Activated naive CD4-positive, alpha-beta T cell treated with anti-CD3 and anti-CD28 coated beads for 36 hours (primary cell): ENCODE measurements at regions of chr20 and their contacts with region 1.

Region 1: DNA sequence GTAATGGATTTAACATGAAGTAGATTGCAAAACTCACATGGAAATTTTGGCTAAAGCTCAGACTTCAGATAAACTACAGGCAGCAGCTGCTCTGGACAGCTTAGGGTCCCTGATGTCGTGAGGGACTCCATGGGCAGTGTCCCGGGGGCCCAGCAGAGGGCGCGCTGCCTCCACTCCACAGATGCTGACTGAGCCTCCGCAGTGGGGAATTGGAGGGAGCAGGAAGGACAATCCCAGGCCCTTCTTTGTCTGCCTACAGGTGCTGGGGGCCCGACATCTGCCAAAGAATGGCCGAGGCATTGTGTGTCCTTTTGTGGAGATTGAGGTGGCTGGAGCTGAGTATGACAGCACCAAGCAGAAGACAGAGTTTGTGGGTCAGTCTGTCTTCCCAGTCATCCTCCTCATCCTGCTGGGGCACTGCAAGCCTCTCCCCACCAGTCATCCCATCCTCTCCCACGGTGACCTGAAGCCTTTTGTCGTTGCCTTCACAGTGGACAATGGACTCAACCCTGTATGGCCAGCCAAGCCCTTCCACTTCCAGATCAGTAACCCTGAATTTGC is 35.9 kb downstream of the PLCG1 start:
- DNase-seq: peak; percentile 75
- H3K4me3 Mint-ChIP-seq: no peak overlapping the region
- H3K27ac Mint-ChIP-seq: peak overlapping the region; percentile 36
- H3K4me1 Mint-ChIP-seq: peaks cover 4% of the 10 kb centered on the region
- H3K27me3 Mint-ChIP-seq: no peaks in the 10 kb centered on the region

Region 2: GRCh38 chr20:41095110-41095969 is 77.9 kb before region 1 on chr20:
- CTCF ChIA-PET with region 1: no interaction called
- intact Hi-C with region 1: no loop called
- DNase-seq: peak; percentile 70
- H3K4me3 Mint-ChIP-seq: no peak overlapping the region
- H3K27ac Mint-ChIP-seq: peak overlapping the region; percentile 61
- H3K4me1 Mint-ChIP-seq: peaks cover 14% of the 10 kb centered on the region
- H3K27me3 Mint-ChIP-seq: no peaks in the 10 kb centered on the region

Region 3: DNA sequence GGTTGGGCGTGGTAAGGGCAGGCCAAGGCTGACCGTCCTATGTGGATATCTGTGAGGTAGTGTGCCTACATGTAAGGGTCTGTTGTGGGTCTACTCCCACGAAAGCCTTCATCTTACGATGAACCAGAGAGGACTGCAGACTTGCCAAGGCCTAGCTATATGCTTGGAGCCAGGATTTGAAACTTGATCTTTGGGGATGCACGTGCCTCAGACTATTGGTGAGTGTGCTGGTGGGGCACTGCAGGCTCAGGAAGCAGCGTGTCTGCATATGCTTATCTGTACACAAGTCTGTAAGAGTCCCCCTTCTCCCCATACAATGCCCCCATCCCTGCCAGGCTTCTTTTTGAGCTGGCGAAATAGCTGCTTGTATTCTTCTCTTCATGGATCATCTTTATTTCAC is 18.0 kb before region 1 on chr20:
- CTCF ChIA-PET with region 1: interaction called, 15 read pairs
- intact Hi-C with region 1: no loop called
- DNase-seq: no peak
- H3K4me3 Mint-ChIP-seq: no peak overlapping the region
- H3K27ac Mint-ChIP-seq: peak overlapping the region; percentile 94
- H3K4me1 Mint-ChIP-seq: peaks cover 95% of the 10 kb centered on the region
- H3K27me3 Mint-ChIP-seq: no peaks in the 10 kb centered on the region

Region 4: GRCh38 chr20:41232973-41233926 is 60.0 kb after region 1 on chr20:
- CTCF ChIA-PET with region 1: interaction called, 20 read pairs
- intact Hi-C with region 1: loop called (anchors 1 kb)
- DNase-seq: no peak
- H3K4me3 Mint-ChIP-seq: no peak overlapping the region
- H3K27ac Mint-ChIP-seq: no peak overlapping the region
- H3K4me1 Mint-ChIP-seq: peaks cover 24% of the 10 kb centered on the region
- H3K27me3 Mint-ChIP-seq: no peaks in the 10 kb centered on the region